ENCODE measurements at regions of chr20 and their contacts with region 1.

Region 1: DNA sequence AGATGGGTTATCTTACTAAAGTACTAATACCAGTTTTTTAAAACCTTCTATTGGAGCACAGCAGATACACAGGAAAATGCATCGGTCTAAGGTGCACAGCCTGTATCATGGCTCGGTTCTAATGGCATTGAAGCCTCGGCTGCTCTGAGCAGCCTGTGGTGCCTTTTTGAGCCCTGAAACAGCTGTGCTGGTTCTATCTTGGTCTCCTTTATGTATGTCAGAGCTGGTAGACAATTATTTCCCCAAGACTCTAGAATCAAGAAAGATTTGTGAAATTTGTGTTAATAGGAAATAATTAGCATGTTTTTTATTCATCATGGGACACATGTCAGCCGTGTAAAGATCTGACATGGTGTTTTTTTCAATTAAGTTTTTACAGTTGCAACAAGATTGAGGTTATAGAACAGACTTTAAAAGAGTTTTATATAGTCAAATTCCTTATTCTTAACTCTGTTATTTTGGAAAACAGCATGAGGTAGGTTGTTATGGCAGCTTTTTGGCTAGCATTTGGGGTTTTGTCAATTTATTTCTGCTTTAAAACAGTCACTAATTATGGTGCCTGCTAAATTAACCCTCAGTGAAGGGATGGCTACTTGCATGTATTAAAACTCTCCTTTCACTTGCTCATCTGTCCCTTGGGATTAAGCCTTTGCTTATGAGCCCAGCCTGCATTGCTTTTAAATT is 40.3 kb upstream of the C20orf144 start:
- DNase-seq: no peak
- ATAC-seq: no peak
- H3K4me3 ChIP-seq: no peak overlapping the region
- H3K27ac ChIP-seq: no peak overlapping the region
- H3K4me1 ChIP-seq: peaks cover 0 to 7% (median 0%) of the 10 kb centered on the region in 9 donors
- H3K27me3 ChIP-seq: no peaks in the 10 kb centered on the region
- CTCF ChIP-seq: no peak

Region 2: DNA sequence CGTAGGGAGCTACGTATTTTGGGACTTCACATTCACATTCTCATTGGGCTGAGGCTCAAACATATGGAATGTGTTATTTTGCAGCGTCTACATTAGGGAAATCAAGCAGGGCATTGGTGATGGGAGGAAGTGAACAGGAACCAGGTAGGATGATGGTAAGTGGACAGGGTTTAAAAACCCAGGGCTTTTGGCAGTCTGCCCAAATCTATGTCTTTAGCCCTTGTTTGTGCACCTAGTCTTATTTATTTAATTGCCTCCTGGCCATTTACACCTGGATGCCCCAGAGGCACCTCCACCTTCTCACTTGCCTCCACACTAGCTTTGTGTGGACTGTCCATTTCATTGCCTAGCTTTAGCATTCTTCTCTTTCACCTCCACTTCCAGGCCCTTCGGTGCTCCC is 16.9 kb after region 1 on chr20:
- intact Hi-C with region 1: loop called in 1 of 10 experiments (anchors 1 kb)
- DNase-seq: no peak
- ATAC-seq: no peak
- H3K4me3 ChIP-seq: no peak overlapping the region
- H3K27ac ChIP-seq: no peak overlapping the region
- H3K4me1 ChIP-seq: peaks cover 0 to 4% (median 0%) of the 10 kb centered on the region in 9 donors
- H3K27me3 ChIP-seq: no peaks in the 10 kb centered on the region
- CTCF ChIP-seq: no peak

Measured in heart right ventricle (tissue), 16 donors.